ENCODE measurements at regions of chr6 and their contacts with region 1.

Region 1: GRCh38 chr6:32885698-32886286 is 31.8 kb downstream of the PSMB9 start:
- DNase-seq: no peak
- H3K4me3 Mint-ChIP-seq: no peak overlapping the region
- H3K27ac Mint-ChIP-seq: no peak overlapping the region
- H3K4me1 Mint-ChIP-seq: no peaks in the 10 kb centered on the region
- H3K27me3 Mint-ChIP-seq: peaks cover 13% of the 10 kb centered on the region

Region 2: GRCh38 chr6:32933636-32934085 is 47.9 kb after region 1 on chr6:
- intact Hi-C with region 1: loop called (anchors 1 kb)
- DNase-seq: peak; percentile 60
- H3K4me3 Mint-ChIP-seq: no peak overlapping the region
- H3K27ac Mint-ChIP-seq: no peak overlapping the region
- H3K4me1 Mint-ChIP-seq: peaks cover 11% of the 10 kb centered on the region
- H3K27me3 Mint-ChIP-seq: peaks cover 17% of the 10 kb centered on the region

Region 3: DNA sequence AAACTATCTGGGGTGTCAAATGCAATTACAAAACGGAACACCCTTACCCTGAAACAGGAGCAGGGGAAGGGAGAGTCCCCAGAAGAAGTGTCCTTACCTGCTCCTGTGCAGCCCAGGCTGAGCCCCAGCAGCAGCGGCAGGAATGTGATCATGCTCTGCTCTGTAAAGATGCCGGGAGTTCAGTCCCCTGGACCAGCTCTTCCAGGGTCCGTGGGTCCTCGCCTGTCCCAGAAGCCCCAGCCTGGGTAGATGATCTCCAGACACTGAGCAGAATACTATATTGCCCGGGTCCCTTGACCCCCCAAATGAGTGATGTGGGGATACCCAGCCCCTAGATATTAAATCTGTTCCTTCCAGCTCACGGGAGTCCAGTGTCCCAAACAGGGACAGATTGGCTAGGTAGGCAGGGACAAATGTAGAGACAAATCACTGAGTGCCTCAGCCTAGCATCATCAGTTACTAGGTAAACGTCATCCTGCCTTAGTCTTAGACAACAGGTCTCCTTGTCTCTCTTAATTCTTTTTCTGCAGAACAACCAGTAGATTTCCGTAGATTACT is 54.9 kb after region 1 on chr6 and contains the start of gene HLA-DMB:
- intact Hi-C with region 1: loop called (anchors 1 kb)
- DNase-seq: peak; percentile 52
- H3K4me3 Mint-ChIP-seq: peak within 1 kb of the TSS; percentile 80
- H3K27ac Mint-ChIP-seq: peak within 1 kb of the TSS; percentile 91
- H3K4me1 Mint-ChIP-seq: peaks cover 59% of the 10 kb centered on the region
- H3K27me3 Mint-ChIP-seq: peaks cover 4% of the 10 kb centered on the region
- total RNA-seq, gene HLA-DMB: 2.7 and 2.8 TPM in 2 replicates

Region 4: DNA sequence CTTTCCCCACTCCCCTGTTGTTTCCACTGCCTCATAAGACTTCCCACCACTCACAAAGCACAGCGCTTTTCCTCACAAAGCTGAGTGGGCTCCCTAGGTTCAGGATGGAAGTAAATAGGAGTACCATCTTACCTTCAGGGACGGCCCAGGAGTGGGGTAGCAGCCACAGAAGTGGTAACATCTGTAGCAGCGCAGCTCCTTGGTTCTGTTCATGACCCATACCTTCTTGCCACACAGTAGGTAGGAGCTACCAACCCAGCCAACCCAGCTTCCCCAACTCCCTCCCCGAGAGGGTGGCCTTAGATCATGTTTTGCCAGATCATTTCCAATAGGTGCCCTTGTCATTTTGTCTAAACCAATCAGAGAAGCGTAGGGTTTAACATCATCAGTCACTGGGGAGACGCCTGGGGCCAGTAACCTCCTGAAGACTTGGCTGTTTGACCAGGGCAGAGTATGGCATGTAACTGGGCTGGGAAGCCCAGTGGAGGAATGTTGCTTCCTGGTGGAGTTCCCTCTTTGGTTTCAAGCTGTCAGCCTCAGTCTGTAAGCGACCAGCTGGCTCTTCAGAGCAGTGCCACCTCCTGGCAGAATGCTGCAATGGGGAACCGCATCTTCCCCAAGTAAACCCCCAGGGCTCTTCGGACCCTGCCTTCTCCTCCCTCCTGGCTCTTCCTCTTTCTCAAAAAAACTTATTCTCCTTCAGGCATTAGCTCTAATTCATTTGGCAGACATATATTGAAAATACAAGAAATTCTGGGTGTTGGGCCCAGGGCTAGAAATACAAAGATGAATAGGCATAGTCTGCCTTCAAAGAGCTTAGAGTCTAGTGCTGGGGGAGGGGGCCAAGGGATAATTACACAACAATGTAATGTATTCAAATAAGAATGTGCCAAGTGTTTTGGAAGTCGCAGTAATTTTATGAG is 67.3 kb after region 1 on chr6 and contains the start of gene HLA-DMA:
- intact Hi-C with region 1: loop called (anchors 1 kb)
- DNase-seq: peak; percentile 79
- H3K4me3 Mint-ChIP-seq: peak within 1 kb of the TSS; percentile 81
- H3K27ac Mint-ChIP-seq: peak within 1 kb of the TSS; percentile 72
- H3K4me1 Mint-ChIP-seq: peaks cover 57% of the 10 kb centered on the region
- H3K27me3 Mint-ChIP-seq: no peaks in the 10 kb centered on the region
- total RNA-seq, gene HLA-DMA: 14.1 and 14.2 TPM in 2 replicates

Region 5: GRCh38 chr6:32984605-32985389 is 99.0 kb after region 1 on chr6:
- intact Hi-C with region 1: loop called (anchors 1 kb)
- DNase-seq: peak; percentile 78
- H3K4me3 Mint-ChIP-seq: no peak overlapping the region
- H3K27ac Mint-ChIP-seq: peak overlapping the region; percentile 73
- H3K4me1 Mint-ChIP-seq: peaks cover 37% of the 10 kb centered on the region
- H3K27me3 Mint-ChIP-seq: no peaks in the 10 kb centered on the region

Region 6: DNA sequence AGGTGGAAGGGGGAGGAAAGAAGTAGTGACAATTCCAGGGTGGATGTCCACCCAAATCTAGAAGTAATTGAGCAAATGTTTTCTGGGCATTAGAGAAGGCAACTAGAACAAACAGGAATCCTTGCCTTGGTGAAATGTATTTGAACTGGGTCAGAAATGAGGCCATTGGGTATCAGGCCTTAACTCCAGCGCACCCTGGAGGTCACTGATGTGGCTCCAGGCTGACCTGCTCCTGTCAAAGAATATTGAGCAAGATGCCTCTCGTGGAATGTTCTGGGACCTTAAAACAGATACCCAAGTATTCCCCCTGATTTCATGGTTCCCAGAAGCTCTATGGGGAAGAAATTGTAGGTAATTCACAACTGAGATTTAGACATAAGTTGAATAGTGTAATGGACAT is 196.9 kb after region 1 on chr6:
- intact Hi-C with region 1: loop called (anchors 5 kb)
- DNase-seq: no peak
- H3K4me3 Mint-ChIP-seq: no peak overlapping the region
- H3K27ac Mint-ChIP-seq: no peak overlapping the region
- H3K4me1 Mint-ChIP-seq: peaks cover 22% of the 10 kb centered on the region
- H3K27me3 Mint-ChIP-seq: peaks cover 2% of the 10 kb centered on the region

Measured in activated T-helper 1 cell treated with anti-CD3 and anti-CD28 coated beads, Interleukin-12 subunit alpha, Interleukin-12 subunit beta, Interleukin-2, Interleukin-4 antibody, amounts not matched to agents 30 ng/mL and 10 ng/mL and 1 ng/mL, durations not matched to agents 14 hours and 24 hours and 36 hours (primary cell).